Activated CD4-positive, alpha-beta memory T cell treated with anti-CD3 and anti-CD28 coated beads for 36 hours (primary cell): ENCODE measurements at regions of chr1 and their contacts with region 1.

Region 1: DNA sequence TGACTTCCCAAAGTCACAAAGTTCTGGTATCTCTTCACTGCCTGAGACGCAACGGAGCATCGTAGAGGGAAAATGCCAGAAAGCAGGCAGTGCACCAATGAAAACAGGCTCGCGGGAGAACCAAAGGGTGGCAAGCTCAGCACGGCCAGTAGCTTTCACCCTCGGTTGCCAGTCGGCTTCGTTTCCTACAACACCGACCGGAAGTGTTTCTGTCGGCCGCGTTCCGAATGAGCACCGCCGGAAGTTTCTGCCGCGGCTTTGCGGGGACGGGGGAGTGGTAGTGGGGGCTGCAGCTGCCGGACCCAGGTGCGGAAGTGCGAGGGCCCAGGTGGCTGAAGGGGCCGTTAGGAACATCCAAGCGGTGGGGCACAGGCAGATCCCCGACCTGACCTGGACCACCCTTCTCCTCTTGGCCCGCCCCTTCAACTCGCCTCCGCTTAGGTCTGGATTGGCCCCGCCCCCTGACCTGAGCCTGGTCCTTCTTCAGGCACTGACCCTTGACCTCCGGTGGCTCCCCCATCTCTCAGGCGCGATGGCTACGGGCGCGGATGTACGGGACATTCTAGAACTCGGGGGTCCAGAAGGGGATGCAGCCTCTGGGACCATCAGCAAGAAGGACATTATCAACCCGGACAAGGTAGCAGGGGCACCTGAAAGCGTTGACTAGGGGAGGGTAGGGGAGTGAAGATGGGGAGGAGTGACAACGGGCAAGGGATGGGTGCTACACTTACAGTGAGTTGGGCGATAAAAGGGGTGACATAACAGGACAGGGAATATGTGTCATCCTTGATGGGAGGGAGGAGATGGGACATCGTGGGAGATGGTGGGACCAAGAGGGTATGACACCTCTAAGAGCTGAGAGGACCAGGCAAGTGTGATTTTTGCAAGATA is at the start of gene DMAP1:
- DNase-seq: peak; percentile 91
- H3K4me3 Mint-ChIP-seq: peak within 1 kb of the TSS; percentile 92
- H3K27ac Mint-ChIP-seq: peak within 1 kb of the TSS; percentile 90
- H3K4me1 Mint-ChIP-seq: peaks cover 33% of the 10 kb centered on the region
- H3K27me3 Mint-ChIP-seq: no peaks in the 10 kb centered on the region
- total RNA-seq, gene DMAP1: 31.1 to 32.8 TPM

Region 2: DNA sequence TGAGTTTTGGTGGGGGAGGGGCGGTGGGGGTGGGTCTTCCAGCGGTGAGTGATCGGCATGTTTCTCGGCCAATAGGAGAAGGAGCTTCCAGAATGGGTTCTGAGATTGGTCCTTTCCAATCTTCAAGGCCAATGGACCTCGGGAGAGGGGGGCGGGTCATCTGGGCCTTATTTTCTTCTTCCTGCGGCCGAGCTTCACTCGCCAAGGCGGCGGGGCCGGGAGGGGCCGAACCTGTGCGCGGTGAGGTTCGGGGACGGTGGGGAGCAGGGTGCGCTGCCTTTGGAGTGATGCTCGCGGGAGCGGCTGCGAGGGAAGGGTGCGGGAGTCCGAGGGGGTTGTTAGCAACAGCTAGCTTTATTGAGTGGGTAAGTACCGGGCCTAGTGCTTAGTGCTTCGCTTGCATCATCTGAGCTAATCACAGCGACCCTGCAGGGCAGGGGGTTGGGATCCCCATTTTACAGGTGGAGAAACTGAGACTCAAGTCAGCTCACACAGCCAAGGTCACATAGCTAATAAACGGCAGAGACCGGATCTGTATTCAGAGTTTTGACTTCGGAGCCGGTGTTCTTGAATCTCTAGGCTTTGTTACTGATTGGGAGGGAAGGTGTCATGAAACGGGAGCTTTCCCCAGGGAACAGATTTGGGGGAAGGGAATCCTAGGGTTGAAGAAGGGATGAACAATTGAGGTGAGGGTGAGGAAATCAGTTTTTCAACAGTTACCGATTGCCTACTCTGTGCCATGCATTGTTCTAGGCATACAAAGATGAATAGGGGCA is 563.0 kb before region 1 on chr1:
- CTCF ChIA-PET with region 1: no interaction called
- POLR2A ChIA-PET with region 1: no interaction called
- intact Hi-C with region 1: loop called (anchors 2 kb)
- DNase-seq: peak; percentile 94
- H3K4me3 Mint-ChIP-seq: peak overlapping the region; percentile 99
- H3K27ac Mint-ChIP-seq: peak overlapping the region; percentile 98
- H3K4me1 Mint-ChIP-seq: peaks cover 30% of the 10 kb centered on the region
- H3K27me3 Mint-ChIP-seq: no peaks in the 10 kb centered on the region

Region 3: GRCh38 chr1:44200336-44200735 is 13.1 kb before region 1 on chr1:
- CTCF ChIA-PET with region 1: interaction called, 12 read pairs
- POLR2A ChIA-PET with region 1: interaction called, 3 read pairs
- intact Hi-C with region 1: no loop called
- DNase-seq: no peak
- H3K4me3 Mint-ChIP-seq: no peak overlapping the region
- H3K27ac Mint-ChIP-seq: no peak overlapping the region
- H3K4me1 Mint-ChIP-seq: no peaks in the 10 kb centered on the region
- H3K27me3 Mint-ChIP-seq: peaks cover 4% of the 10 kb centered on the region

Region 4: DNA sequence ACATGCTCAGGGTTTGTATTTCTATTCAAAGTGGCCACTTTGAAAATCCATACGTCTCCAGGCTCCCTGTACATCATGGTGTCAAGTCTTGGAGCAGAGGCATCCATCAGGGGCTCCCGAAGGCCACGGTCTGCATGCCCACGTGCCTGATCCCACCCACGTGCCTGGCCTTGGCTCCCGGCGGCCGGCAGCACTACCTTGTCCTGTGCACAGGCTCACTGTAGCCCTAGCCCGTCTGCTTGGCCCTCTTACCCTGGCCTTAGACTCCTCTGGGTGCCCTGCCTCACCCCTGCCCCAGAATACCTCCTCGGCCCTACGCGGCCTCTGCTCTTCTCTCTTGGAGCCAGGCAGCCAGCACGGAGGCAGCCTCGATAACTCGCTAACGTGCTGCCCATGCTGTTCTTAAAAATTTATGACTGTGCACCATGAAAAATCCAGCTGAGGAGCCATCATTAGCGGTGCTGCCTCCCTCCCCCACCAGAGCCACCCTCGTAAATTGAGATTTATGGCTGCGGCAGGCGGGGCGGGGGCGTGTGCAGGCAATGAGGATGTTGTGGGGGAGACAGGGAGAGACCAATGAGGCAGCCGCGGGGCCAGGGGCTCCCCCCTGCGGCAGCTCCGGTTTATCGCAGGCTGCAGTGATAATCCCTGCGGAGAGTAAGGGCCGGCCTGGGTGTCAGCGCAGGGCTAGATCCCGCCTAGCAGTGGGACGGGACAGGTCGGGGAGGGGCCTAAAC is 24.4 kb after region 1 on chr1:
- CTCF ChIA-PET with region 1: interaction called, 13 read pairs
- POLR2A ChIA-PET with region 1: no interaction called
- intact Hi-C with region 1: no loop called
- DNase-seq: peak; percentile 51
- H3K4me3 Mint-ChIP-seq: no peak overlapping the region
- H3K27ac Mint-ChIP-seq: no peak overlapping the region
- H3K4me1 Mint-ChIP-seq: no peaks in the 10 kb centered on the region
- H3K27me3 Mint-ChIP-seq: no peaks in the 10 kb centered on the region

Region 5: GRCh38 chr1:44354840-44355581 is 141.5 kb after region 1 on chr1 and contains the start of gene ERI3:
- CTCF ChIA-PET with region 1: interaction called, 11 read pairs
- POLR2A ChIA-PET with region 1: no interaction called
- intact Hi-C with region 1: loop called (anchors 2 kb)
- DNase-seq: peak; percentile 98
- H3K4me3 Mint-ChIP-seq: peak within 1 kb of the TSS; percentile 85
- H3K27ac Mint-ChIP-seq: peak within 1 kb of the TSS; percentile 54
- H3K4me1 Mint-ChIP-seq: peaks cover 32% of the 10 kb centered on the region
- H3K27me3 Mint-ChIP-seq: no peaks in the 10 kb centered on the region
- total RNA-seq, gene ERI3: 35.7 to 37.0 TPM